ENCODE measurements at regions of chr2 and their contacts with region 1.

Region 1: DNA sequence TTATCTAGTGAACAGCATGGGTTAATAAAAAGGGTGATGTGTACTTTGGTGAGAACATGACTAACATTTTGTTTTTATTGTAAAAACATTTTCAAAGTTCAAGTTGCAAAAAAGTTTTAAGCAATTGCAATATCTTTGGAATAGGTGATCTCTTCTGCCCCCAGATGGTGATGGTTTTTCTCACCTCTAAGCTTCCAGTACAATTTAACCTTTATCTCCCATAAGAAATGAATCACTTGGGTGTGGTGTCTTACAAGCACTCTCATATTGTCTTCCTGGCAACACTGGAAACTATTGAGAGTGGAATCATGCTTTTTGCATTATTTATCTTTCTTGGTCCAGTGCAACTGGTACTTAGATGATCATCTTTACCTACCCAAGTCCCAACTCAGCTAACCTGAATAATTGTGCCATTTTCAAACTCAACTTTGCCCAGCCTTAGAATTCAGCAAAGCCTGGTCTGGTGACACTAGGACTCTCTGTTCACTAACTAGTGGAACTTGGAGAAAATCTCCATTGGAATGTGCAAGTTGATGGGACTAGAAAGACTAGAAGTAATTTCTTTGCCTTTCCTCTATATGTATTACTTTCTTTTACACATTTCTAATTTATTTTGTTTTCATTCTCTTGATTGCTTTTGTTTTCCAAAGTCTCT is 964.7 kb upstream of the ZEB2 start:
- DNase-seq: peak; percentile 72
- H3K4me3 Mint-ChIP-seq: no peak overlapping the region
- H3K27ac Mint-ChIP-seq: peak overlapping the region; percentile 91
- H3K4me1 Mint-ChIP-seq: peaks cover 20% of the 10 kb centered on the region
- H3K27me3 Mint-ChIP-seq: no peaks in the 10 kb centered on the region
- CTCF ChIP-seq: peak; percentile 41

Region 2: GRCh38 chr2:143513081-143513480 is 1971.5 kb before region 1 on chr2:
- CTCF ChIA-PET with region 1: no interaction called
- POLR2A ChIA-PET with region 1: no interaction called
- intact Hi-C with region 1: loop called (anchors 5 kb)
- DNase-seq: peak; percentile 49
- H3K4me3 Mint-ChIP-seq: no peak overlapping the region
- H3K27ac Mint-ChIP-seq: no peak overlapping the region
- H3K4me1 Mint-ChIP-seq: peaks cover 13% of the 10 kb centered on the region
- H3K27me3 Mint-ChIP-seq: no peaks in the 10 kb centered on the region
- CTCF ChIP-seq: no peak

Region 3: GRCh38 chr2:143686585-143687164 is 1797.9 kb before region 1 on chr2:
- CTCF ChIA-PET with region 1: no interaction called
- POLR2A ChIA-PET with region 1: no interaction called
- intact Hi-C with region 1: loop called (anchors 10 kb)
- DNase-seq: peak; percentile 58
- H3K4me3 Mint-ChIP-seq: no peak overlapping the region
- H3K27ac Mint-ChIP-seq: no peak overlapping the region
- H3K4me1 Mint-ChIP-seq: no peaks in the 10 kb centered on the region
- H3K27me3 Mint-ChIP-seq: no peaks in the 10 kb centered on the region
- CTCF ChIP-seq: peak; percentile 63

Region 4: DNA sequence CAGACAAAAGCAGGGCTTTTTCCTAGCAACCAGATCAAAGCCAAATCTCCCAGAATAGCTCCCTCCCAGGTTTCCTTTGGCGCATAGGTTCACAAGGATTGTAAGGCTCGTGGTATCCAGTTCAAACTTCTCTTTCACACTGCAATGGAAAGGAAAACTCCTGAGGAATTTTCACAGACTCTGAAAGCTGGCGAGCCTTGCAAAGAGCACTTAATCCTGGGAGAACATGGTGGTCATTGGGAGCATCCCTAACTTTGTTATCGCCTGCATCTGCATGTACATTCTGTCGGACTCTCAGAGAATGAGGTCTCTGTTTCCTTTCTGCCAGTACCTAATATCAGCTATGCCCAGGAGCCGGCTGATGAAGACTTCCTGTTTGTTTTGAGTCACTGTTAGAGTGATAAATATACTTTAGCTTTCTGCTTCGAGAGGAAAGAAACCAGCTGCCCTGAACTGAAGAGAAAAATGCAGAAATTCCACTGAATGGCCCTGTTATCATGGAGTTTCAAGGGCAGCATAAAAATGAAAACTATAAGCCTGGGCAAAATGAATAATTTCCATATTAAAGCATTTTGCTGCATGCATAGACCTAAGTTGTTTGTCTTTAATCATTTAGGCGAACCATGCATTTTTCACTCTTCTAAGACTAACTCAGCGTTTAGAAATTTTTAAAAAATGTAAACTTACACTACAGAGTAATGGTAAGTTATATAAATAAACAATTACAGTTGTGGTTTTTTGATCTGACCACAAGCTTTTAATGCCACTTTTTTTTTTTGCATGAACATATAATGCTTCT is 888.3 kb before region 1 on chr2:
- CTCF ChIA-PET with region 1: no interaction called
- POLR2A ChIA-PET with region 1: no interaction called
- intact Hi-C with region 1: loop called (anchors 5 kb)
- DNase-seq: peak; percentile 56
- H3K4me3 Mint-ChIP-seq: no peak overlapping the region
- H3K27ac Mint-ChIP-seq: peak overlapping the region; percentile 46
- H3K4me1 Mint-ChIP-seq: peaks cover 15% of the 10 kb centered on the region
- H3K27me3 Mint-ChIP-seq: no peaks in the 10 kb centered on the region
- CTCF ChIP-seq: no peak

Region 5: DNA sequence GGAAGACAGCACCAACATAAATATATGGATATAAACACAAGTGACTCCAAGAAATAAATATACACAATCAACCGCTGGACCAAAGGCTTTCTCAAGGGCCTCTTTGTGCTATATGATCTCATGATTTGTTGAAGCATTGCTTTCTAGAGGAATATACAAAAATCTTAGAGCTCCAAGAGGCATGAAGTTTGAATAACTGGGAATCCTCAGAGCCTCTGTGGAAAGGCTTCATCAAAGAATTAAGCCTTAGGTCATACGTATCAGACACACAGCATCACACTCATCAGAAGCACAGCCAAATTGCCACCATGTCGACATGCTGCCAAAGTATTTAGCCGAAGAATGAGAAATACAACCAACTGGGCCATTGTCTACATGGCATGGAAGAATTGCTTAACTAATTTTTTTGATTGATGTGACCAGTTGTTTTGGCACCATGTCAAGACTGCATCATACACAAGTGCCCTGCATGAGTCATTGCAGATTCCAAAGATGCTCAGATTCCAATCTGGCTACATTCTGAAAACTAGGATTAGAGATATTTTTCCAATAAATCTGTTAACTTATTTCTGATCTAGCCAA is 104.0 kb before region 1 on chr2:
- CTCF ChIA-PET with region 1: no interaction called
- POLR2A ChIA-PET with region 1: no interaction called
- intact Hi-C with region 1: loop called (anchors 10 kb)
- DNase-seq: peak; percentile 96
- H3K4me3 Mint-ChIP-seq: no peak overlapping the region
- H3K27ac Mint-ChIP-seq: no peak overlapping the region
- H3K4me1 Mint-ChIP-seq: peaks cover 7% of the 10 kb centered on the region
- H3K27me3 Mint-ChIP-seq: no peaks in the 10 kb centered on the region
- CTCF ChIP-seq: no peak

Region 6: GRCh38 chr2:146317959-146318358 is 833.4 kb after region 1 on chr2:
- CTCF ChIA-PET with region 1: no interaction called
- POLR2A ChIA-PET with region 1: no interaction called
- intact Hi-C with region 1: loop called (anchors 5 kb)
- DNase-seq: peak; percentile 60
- H3K4me3 Mint-ChIP-seq: no peak overlapping the region
- H3K27ac Mint-ChIP-seq: peak overlapping the region; percentile 89
- H3K4me1 Mint-ChIP-seq: peaks cover 11% of the 10 kb centered on the region
- H3K27me3 Mint-ChIP-seq: no peaks in the 10 kb centered on the region
- CTCF ChIP-seq: no peak

Measured in MCF 10A (cell line).